ENCODE measurements at regions of chr3 and their contacts with region 1.

Region 1: GRCh38 chr3:128075516-128076482 is 23.6 kb downstream of the SEC61A1 start:
- DNase-seq: peak; percentile 90
- H3K4me3 ChIP-seq: peak overlapping the region; percentile 22 to 56 (median 53)
- H3K27ac ChIP-seq: peak overlapping the region; percentile 7 to 62 (median 36)
- H3K4me1 ChIP-seq: peaks cover 0 to 28% (median 23%) of the 10 kb centered on the region in 4 donors
- H3K27me3 ChIP-seq: peaks cover 0 to 4% (median 0%) of the 10 kb centered on the region in 3 donors
- CTCF ChIP-seq: peak; percentile 54 to 98 (median 82)
- EP300 ChIP-seq: no peak
- POLR2A ChIP-seq: no peak

Region 2: GRCh38 chr3:128123538-128124368 is 48.0 kb after region 1 on chr3 and contains the start of gene RUVBL1:
- intact Hi-C with region 1: loop called (anchors 5 kb)
- DNase-seq: peak; percentile 99
- H3K4me3 ChIP-seq: peak within 1 kb of the TSS; percentile 62 to 95 (median 74)
- H3K27ac ChIP-seq: peak within 1 kb of the TSS; percentile 71 to 85 (median 76)
- H3K4me1 ChIP-seq: peaks cover 0 to 15% (median 11%) of the 10 kb centered on the region in 4 donors
- H3K27me3 ChIP-seq: no peaks in the 10 kb centered on the region
- CTCF ChIP-seq: no peak
- EP300 ChIP-seq: peak in 2 of 4 donors; percentile 13 to 77
- POLR2A ChIP-seq: peak in 1 of 2 donors; percentile 9
- total RNA-seq, gene RUVBL1: 16.3 to 20.9 (median 17.1) TPM

Region 3: GRCh38 chr3:128153156-128154041 is 77.6 kb after region 1 on chr3 and contains the start of gene EEFSEC:
- intact Hi-C with region 1: loop called (anchors 2 kb)
- DNase-seq: peak; percentile 91
- H3K4me3 ChIP-seq: peak within 1 kb of the TSS; percentile 78 to 93 (median 88)
- H3K27ac ChIP-seq: peak within 1 kb of the TSS; percentile 90 to 93 (median 90)
- H3K4me1 ChIP-seq: peaks cover 0 to 12% (median 8%) of the 10 kb centered on the region in 4 donors
- H3K27me3 ChIP-seq: no peaks in the 10 kb centered on the region
- CTCF ChIP-seq: no peak
- EP300 ChIP-seq: no peak
- POLR2A ChIP-seq: peak in 1 of 2 donors; percentile 32
- total RNA-seq, gene EEFSEC: 8.6 to 16.1 (median 12.9) TPM